ENCODE measurements at regions of chr9 and their contacts with region 1.

Region 1: DNA sequence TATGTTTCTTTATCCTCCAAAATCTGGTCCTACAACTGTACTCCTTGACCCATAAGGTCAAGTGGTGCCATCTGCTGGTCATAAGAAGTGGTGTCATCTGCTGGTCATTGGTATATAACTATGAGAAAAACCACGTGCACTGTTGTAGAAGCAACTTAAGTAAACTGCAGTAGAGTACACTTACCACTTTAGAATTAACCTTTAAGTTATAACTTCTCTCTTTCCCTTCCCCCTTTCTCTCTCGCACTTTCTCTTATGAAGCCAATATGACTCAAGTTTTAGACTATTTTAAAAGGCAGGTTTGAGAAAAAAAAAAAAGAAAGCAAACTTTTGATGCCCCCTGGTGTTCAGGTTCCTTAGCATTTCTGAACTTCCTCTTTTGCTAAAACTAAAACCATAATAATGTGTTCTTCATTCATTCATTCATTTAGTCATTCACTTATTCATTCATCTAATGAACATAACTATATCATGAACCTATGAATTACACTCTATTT is 12.8 kb upstream of the MTAP start:
- DNase-seq: peak; percentile 88
- ATAC-seq: peak; percentile 89
- H3K4me3 ChIP-seq: peak overlapping the region; percentile 57
- H3K27ac ChIP-seq: peak overlapping the region; percentile 57
- H3K4me1 ChIP-seq: peaks cover 18% of the 10 kb centered on the region
- H3K27me3 ChIP-seq: no peaks in the 10 kb centered on the region
- CTCF ChIP-seq: peak; percentile 86

Region 2: GRCh38 chr9:21317956-21318923 is 471.3 kb before region 1 on chr9:
- CTCF ChIA-PET with region 1: no interaction called
- POLR2A ChIA-PET with region 1: no interaction called
- intact Hi-C with region 1: loop called (anchors 2 kb)
- DNase-seq: peak; percentile 64
- ATAC-seq: peak; percentile 76
- H3K4me3 ChIP-seq: no peak overlapping the region
- H3K27ac ChIP-seq: no peak overlapping the region
- H3K4me1 ChIP-seq: no peaks in the 10 kb centered on the region
- H3K27me3 ChIP-seq: no peaks in the 10 kb centered on the region
- CTCF ChIP-seq: peak; percentile 62

Region 3: DNA sequence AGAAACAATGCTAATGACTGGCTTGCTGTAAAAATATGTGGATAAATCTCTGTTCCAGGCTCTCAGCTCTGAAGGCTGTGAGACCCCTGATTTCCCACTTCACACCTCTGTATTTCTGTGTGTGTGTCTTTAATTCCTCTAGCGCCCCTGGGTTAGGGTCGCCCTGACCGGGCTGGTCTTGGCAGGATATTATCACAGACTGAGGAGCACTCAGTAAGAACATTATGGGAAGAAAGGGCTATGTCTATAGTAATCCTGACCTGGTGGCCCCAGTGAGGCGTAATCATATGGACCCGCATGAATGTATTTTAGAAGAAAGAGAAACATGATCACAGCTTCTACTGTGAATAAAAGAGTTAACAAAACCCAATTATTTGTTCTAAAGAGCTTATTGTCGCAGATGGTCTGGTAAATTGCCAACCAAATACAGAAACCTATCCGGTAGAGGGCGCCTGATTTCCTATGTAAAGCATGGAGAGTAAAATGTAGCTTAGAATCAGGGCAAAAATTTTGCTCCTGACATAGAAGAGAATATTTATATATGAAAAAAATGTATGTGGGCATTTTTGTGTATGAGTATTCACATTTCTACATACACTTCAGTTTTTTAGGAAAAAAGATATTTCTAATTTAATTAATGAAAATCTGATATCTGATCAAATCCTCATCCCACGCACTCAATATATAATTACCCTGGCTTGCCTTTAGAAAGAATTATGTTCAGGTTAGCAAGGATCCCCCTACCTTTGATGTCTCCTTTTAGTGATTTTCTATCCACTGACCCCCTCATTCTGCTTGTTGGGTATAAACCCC is 355.2 kb before region 1 on chr9:
- CTCF ChIA-PET with region 1: interaction called, 3 read pairs
- POLR2A ChIA-PET with region 1: no interaction called
- intact Hi-C with region 1: loop called (anchors 1 kb)
- DNase-seq: peak; percentile 83
- ATAC-seq: no peak
- H3K4me3 ChIP-seq: no peak overlapping the region
- H3K27ac ChIP-seq: no peak overlapping the region
- H3K4me1 ChIP-seq: no peaks in the 10 kb centered on the region
- H3K27me3 ChIP-seq: no peaks in the 10 kb centered on the region
- CTCF ChIP-seq: peak; percentile 73

Region 4: GRCh38 chr9:21559424-21560280 is 229.9 kb before region 1 on chr9:
- CTCF ChIA-PET with region 1: no interaction called
- POLR2A ChIA-PET with region 1: no interaction called
- intact Hi-C with region 1: loop called (anchors 2 kb)
- DNase-seq: peak; percentile 82
- ATAC-seq: peak; percentile 78
- H3K4me3 ChIP-seq: peak overlapping the region; percentile 96
- H3K27ac ChIP-seq: peak overlapping the region; percentile 99
- H3K4me1 ChIP-seq: peaks cover 32% of the 10 kb centered on the region
- H3K27me3 ChIP-seq: no peaks in the 10 kb centered on the region
- CTCF ChIP-seq: no peak

Region 5: GRCh38 chr9:21677834-21678233 is 111.8 kb before region 1 on chr9:
- CTCF ChIA-PET with region 1: interaction called, 3 read pairs
- POLR2A ChIA-PET with region 1: no interaction called
- intact Hi-C with region 1: loop called (anchors 2 kb)
- DNase-seq: peak; percentile 96
- ATAC-seq: peak; percentile 64
- H3K4me3 ChIP-seq: peak overlapping the region; percentile 52
- H3K27ac ChIP-seq: peak overlapping the region; percentile 99
- H3K4me1 ChIP-seq: peaks cover 76% of the 10 kb centered on the region
- H3K27me3 ChIP-seq: no peaks in the 10 kb centered on the region
- CTCF ChIP-seq: no peak

Region 6: GRCh38 chr9:21873540-21874221 is 84.1 kb after region 1 on chr9:
- CTCF ChIA-PET with region 1: no interaction called
- POLR2A ChIA-PET with region 1: no interaction called
- intact Hi-C with region 1: no loop called
- DNase-seq: peak; percentile 36
- ATAC-seq: no peak
- H3K4me3 ChIP-seq: no peak overlapping the region
- H3K27ac ChIP-seq: no peak overlapping the region
- H3K4me1 ChIP-seq: peaks cover 18% of the 10 kb centered on the region
- H3K27me3 ChIP-seq: no peaks in the 10 kb centered on the region
- CTCF ChIP-seq: no peak

Measured in PC-3 (cell line).